Endothelial cell of umbilical vein (primary cell): ENCODE measurements at regions of chr22 and their contacts with region 1.

Region 1: GRCh38 chr22:39283322-39284004 is 36.0 kb downstream of the RPL3 start:
- DNase-seq: peak; percentile 91
- H3K4me3 ChIP-seq: no peak overlapping the region
- H3K27ac ChIP-seq: peak overlapping the region; percentile 93
- H3K4me1 ChIP-seq: peaks cover 43% of the 10 kb centered on the region
- H3K27me3 ChIP-seq: no peaks in the 10 kb centered on the region
- CTCF ChIP-seq: no peak
- POLR2A ChIP-seq: peak; percentile 53

Region 2: GRCh38 chr22:39230261-39231196 is 52.9 kb before region 1 on chr22:
- CTCF ChIA-PET with region 1: interaction called, 15 read pairs
- POLR2A ChIA-PET with region 1: interaction called, 3 read pairs
- dilution Hi-C with region 1: no loop called
- intact Hi-C with region 1: no loop called
- DNase-seq: no peak
- H3K4me3 ChIP-seq: no peak overlapping the region
- H3K27ac ChIP-seq: peak overlapping the region; percentile 51
- H3K4me1 ChIP-seq: peaks cover 47% of the 10 kb centered on the region
- H3K27me3 ChIP-seq: no peaks in the 10 kb centered on the region
- CTCF ChIP-seq: peak in 1 of 2 donors; percentile 32
- POLR2A ChIP-seq: no peak

Region 3: DNA sequence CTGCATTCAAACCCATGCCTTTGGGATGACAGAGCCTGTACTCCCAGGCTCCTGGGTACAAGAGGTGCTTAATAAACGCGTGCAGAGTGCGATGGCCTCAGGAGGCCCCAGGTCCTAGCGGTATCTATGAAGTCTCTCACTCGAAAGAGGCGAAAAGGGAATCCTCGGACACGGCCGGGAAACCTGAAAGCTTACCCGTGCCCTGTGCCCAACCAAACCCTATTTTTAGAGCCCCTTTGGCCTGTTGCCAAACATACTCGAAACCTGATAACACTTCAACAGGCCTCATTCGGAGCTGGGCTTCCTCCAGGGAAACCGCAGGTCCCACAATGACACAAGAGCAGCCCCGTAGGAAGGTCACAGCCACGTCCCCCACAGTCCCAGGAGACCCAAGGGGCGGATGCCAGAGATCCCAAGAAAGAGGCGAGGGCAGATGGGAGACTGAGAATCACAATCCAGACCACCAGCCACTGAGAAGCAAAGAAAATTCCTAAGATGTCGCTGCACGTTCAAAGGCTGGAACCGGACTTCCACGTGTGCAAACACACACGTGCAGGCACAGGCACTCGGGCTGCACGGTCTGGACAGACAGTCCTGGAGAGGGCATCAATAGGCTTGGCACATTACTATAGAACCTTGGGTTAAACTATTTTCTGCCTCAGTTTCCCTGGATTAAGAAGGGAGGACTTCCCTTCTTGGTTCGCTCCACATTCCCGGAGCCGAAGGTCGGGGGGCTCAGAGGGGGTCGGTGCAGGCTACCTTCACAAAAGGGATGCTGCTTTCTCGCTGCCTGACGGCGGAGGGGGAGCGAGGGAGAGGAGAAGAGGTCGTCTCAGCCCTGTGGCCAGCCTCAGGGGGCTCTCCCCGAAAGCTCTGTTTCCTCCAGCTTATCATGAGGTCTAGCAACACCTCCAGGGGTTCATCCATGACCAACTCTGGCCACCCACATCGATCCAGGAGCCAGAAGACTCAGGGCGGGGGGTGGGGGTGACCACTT is 46.8 kb before region 1 on chr22:
- CTCF ChIA-PET with region 1: interaction called, 15 read pairs
- POLR2A ChIA-PET with region 1: no interaction called
- dilution Hi-C with region 1: no loop called
- intact Hi-C with region 1: loop called (anchors 1 kb)
- DNase-seq: no peak
- H3K4me3 ChIP-seq: no peak overlapping the region
- H3K27ac ChIP-seq: peak overlapping the region; percentile 88
- H3K4me1 ChIP-seq: peaks cover 91% of the 10 kb centered on the region
- H3K27me3 ChIP-seq: no peaks in the 10 kb centered on the region
- CTCF ChIP-seq: no peak
- POLR2A ChIP-seq: peak; percentile 19

Region 4: DNA sequence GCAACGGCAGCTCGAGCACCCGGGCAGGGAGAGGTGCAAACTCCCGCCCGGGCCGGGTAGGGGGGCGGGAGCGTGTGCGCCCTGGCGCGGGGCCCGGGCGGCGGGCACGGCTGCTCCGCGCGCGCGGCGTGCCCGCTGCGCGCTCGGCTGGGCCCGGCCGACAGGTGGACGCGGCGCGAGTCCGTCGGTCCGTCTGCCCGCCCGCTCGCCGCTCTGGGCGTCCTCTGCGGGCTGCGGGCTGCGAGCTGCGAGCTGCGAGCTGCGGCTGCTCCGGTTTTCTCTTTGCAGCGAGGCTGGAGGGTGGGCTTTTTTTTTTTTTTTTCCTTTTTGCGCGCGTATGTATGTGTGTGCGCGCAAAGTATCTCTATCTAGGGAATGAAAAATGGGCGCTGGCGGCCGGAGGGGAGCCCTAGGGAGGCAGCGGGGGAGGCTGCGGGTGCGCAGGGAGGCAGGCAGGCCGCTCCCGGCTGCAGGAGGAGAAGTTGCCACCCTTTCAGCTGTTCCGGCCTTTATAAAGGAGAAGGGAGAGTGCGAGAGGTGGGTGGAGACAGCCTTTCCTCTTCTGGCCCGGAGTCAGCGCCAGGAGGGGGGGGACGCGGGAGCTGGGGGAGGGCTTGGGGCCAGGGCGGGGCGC is 38.9 kb before region 1 on chr22 and contains the start of gene PDGFB:
- CTCF ChIA-PET with region 1: interaction called, 15 read pairs
- POLR2A ChIA-PET with region 1: interaction called, 20 read pairs
- dilution Hi-C with region 1: no loop called
- intact Hi-C with region 1: loop called (anchors 1 kb)
- DNase-seq: peak; percentile 65
- H3K4me3 ChIP-seq: peak within 1 kb of the TSS; percentile 68 to 91 (median 78)
- H3K27ac ChIP-seq: peak within 1 kb of the TSS; percentile 53
- H3K4me1 ChIP-seq: peaks cover 34% of the 10 kb centered on the region
- H3K27me3 ChIP-seq: no peaks in the 10 kb centered on the region
- CTCF ChIP-seq: no peak
- POLR2A ChIP-seq: peak; percentile 99
- total RNA-seq, gene PDGFB: 240 and 273 TPM in 2 replicates

Region 5: GRCh38 chr22:39253435-39254070 is 29.9 kb before region 1 on chr22:
- CTCF ChIA-PET with region 1: interaction called, 11 read pairs
- POLR2A ChIA-PET with region 1: interaction called, 4 read pairs
- dilution Hi-C with region 1: no loop called
- intact Hi-C with region 1: loop called (anchors 1 kb)
- DNase-seq: peak; percentile 92
- H3K4me3 ChIP-seq: no peak overlapping the region
- H3K27ac ChIP-seq: peak overlapping the region; percentile 96
- H3K4me1 ChIP-seq: peaks cover 38% of the 10 kb centered on the region
- H3K27me3 ChIP-seq: no peaks in the 10 kb centered on the region
- CTCF ChIP-seq: no peak
- POLR2A ChIP-seq: no peak